CD4-positive, alpha-beta T cell (primary cell): ENCODE measurements at regions of chr20 and their contacts with region 1.

Region 1: DNA sequence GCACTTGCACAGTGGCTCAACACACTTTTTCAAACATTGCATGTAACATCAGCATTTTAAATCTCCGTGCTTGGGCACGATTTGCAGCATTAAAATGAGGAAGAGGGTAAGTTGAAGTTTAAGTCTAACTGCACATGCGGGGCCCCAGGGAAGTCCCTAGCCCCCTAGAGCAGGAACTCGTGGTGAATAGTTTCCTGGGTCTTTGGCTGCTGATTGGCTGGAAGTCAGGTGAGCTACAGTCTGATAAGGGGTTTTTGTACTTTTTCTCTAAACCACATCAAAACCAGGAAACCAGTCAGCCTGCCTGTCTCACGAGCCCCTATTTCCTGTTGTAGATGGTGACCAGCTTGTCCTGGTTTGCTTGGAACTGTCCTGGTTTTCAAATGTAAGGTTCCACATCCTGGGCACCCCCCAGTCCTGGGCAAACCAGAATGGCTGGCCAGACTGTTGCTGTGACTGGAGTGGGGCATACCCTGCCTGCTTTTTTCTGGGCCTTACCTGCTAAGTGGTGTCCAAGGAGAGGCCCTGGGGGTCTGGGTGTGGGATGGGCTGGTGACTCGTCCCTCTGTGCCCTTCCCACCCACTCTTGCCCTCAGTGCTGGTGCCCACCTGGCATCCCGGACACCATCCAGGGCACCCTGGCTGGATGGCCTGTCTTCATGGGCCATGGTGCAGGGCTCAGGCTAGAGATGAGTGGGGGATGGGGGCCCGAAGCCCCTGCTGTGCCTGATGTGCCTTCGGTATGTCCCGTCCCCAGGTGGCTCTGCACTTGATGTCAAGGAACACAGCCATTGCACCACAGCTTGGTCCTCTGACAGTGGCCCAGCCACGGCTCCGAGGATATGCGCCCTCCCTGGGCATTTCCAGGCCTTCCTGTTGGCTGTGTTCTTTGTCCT is 31.8 kb downstream of the SUN5 start:
- DNase-seq: peak; percentile 58 to 97 (median 76)
- ATAC-seq: peak; percentile 66
- H3K4me3 ChIP-seq: peak overlapping the region; percentile 19
- H3K4me3 Mint-ChIP-seq: peak overlapping the region; percentile 61
- H3K27ac ChIP-seq: peak overlapping the region; percentile 87 to 98
- H3K27ac Mint-ChIP-seq: no peak overlapping the region
- H3K4me1 ChIP-seq: peaks cover 99% of the 10 kb centered on the region
- H3K4me1 Mint-ChIP-seq: peaks cover 43% of the 10 kb centered on the region
- H3K27me3 ChIP-seq: no peaks in the 10 kb centered on the region
- H3K27me3 Mint-ChIP-seq: no peaks in the 10 kb centered on the region
- CTCF ChIP-seq: no peak

Region 2: GRCh38 chr20:32991383-32991782 is 19.0 kb after region 1 on chr20:
- CTCF ChIA-PET with region 1: no interaction called
- POLR2A ChIA-PET with region 1: interaction called, 7 read pairs
- intact Hi-C with region 1: loop called in 1 of 2 experiments (anchors 2 kb)
- DNase-seq: peak in 2 of 14 experiments; percentile 17 to 54
- ATAC-seq: peak; percentile 62
- H3K4me3 ChIP-seq: no peak overlapping the region
- H3K4me3 Mint-ChIP-seq: no peak overlapping the region
- H3K27ac ChIP-seq: no peak overlapping the region
- H3K27ac Mint-ChIP-seq: peak overlapping the region; percentile 66
- H3K4me1 ChIP-seq: peaks cover 25% of the 10 kb centered on the region
- H3K4me1 Mint-ChIP-seq: peaks cover 41% of the 10 kb centered on the region
- H3K27me3 ChIP-seq: no peaks in the 10 kb centered on the region
- H3K27me3 Mint-ChIP-seq: no peaks in the 10 kb centered on the region
- CTCF ChIP-seq: no peak

Region 3: GRCh38 chr20:33262658-33263065 is 290.2 kb after region 1 on chr20:
- CTCF ChIA-PET with region 1: no interaction called
- POLR2A ChIA-PET with region 1: no interaction called
- intact Hi-C with region 1: no loop called
- DNase-seq: peak in 2 of 14 experiments; percentile 39 to 47
- ATAC-seq: no peak
- H3K4me3 ChIP-seq: no peak overlapping the region
- H3K4me3 Mint-ChIP-seq: no peak overlapping the region
- H3K27ac ChIP-seq: no peak overlapping the region
- H3K27ac Mint-ChIP-seq: no peak overlapping the region
- H3K4me1 ChIP-seq: no peaks in the 10 kb centered on the region
- H3K4me1 Mint-ChIP-seq: no peaks in the 10 kb centered on the region
- H3K27me3 ChIP-seq: peaks cover 6 to 9% of the 10 kb centered on the region in 2 experiments
- H3K27me3 Mint-ChIP-seq: peaks cover 61% of the 10 kb centered on the region
- CTCF ChIP-seq: no peak